Activated T-helper 1 cell treated with anti-CD3 and anti-CD28 coated beads, Interleukin-12 subunit alpha, Interleukin-12 subunit beta, Interleukin-2, Interleukin-4 antibody, amounts not matched to agents 30 ng/mL and 10 ng/mL and 1 ng/mL, durations not matched to agents 14 hours and 24 hours and 36 hours (primary cell): ENCODE measurements at regions of chr3 and their contacts with region 1.

Region 1: DNA sequence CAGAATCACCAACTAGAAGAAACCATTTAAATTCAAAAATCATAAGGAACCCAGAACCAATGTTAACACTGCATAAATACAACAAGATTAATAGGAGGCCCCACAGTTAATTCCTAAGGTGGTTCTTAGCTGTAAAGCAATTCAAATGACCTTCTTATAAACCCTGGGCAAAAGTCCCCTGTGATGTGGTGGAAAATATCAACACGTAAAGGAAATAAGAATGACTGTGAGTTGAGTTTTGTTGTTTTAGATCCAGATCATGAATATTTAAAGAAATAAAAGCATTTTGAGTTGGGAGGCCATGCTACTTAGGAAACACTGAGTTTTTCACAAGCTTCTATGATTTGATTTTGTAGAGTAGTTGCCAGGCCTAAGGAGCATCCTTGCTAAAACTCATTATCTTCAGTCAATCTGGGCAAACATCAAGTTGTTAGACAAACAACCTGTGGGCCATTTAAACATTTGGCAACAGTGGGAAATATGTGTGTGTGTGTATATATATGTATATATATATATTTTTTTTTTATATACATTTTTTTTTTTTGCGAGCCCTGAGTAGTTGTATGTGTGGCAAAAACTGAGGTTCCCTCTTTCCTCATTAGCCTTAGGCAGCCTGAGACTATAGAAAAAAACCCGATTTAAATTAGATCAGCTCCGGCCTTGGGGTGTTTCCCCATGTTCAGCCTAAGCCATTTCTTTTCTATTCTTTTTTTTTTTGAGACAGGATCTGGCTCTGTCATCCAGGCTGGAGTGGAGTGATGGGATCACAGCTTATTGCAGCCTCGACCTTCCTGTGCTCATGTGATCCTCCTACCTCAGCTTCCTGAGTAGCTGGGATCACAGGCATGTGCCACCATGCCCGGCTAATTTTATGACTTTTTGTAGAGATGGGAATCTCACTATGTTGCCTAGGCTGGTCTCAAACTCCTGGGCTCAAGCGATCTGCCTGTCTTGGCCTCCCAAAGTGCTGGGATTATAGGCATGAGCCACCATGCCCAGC is 8.0 kb upstream of the PXK start:
- DNase-seq: peak; percentile 6
- H3K4me3 Mint-ChIP-seq: peak overlapping the region; percentile 6
- H3K27ac Mint-ChIP-seq: peak overlapping the region; percentile 86
- H3K4me1 Mint-ChIP-seq: peaks cover 31% of the 10 kb centered on the region
- H3K27me3 Mint-ChIP-seq: no peaks in the 10 kb centered on the region

Region 2: DNA sequence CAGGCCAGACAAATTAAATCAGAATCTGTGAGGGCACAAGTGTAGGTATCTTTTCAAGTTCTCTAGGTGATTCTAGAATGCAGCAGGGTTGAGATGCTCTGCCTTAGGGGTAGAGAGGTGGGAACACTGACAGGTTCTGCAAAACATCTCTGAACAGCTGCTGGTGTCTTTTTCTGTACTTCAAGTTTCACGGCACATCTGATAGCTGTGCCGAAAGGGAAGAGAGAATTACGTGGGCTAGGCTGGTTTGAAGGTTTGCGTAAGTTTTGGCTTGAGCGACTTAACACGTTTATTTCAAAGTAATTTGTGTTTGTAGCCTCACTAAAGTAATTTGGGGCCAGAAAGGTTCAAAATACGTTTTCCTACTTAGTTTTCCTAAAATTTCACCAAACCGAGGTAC is 30.5 kb after region 1 on chr3:
- intact Hi-C with region 1: loop called (anchors 1 kb)
- DNase-seq: no peak
- H3K4me3 Mint-ChIP-seq: no peak overlapping the region
- H3K27ac Mint-ChIP-seq: peak overlapping the region; percentile 96
- H3K4me1 Mint-ChIP-seq: peaks cover 75% of the 10 kb centered on the region
- H3K27me3 Mint-ChIP-seq: no peaks in the 10 kb centered on the region

Region 3: DNA sequence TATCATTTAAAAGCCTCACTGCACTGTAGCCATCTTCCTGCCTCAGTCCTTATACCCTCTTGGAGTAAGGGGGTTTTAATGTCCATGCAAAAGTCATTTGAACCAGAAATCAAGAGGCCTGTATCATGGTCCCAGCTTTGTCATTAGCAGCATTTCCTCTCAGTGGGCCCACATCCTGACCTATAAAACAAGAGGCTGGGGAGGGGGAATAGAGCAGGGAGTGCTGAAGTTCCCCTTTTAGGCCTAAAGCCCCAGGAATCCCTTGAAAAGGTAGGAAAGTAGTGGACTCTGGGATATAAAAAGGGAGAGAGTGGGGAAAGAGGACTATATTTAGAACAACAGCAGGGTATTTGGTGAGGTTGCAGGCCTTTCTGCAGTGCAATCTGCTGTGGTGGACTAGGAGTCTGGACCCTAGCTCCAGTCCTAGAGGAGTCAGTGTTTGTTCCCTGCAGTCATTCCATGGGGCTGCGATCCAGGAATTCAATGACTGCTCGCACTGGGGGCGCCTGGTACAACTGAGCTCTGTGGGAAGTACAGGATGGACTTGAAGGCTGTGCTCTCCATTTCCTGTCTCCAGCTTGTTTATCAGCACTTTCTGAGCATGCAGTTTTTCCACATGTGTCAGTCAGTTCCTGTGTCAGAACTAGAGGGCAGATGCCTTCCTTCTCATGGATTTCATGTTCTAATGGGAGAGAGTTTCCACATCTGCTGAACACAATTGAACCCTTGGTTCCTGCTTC is 62.1 kb after region 1 on chr3:
- intact Hi-C with region 1: loop called (anchors 2 kb)
- DNase-seq: no peak
- H3K4me3 Mint-ChIP-seq: peak overlapping the region; percentile 19
- H3K27ac Mint-ChIP-seq: peak overlapping the region; percentile 81
- H3K4me1 Mint-ChIP-seq: peaks cover 40% of the 10 kb centered on the region
- H3K27me3 Mint-ChIP-seq: no peaks in the 10 kb centered on the region

Region 4: GRCh38 chr3:58471025-58471887 is 146.6 kb after region 1 on chr3:
- intact Hi-C with region 1: loop called (anchors 1 kb)
- DNase-seq: peak; percentile 73
- H3K4me3 Mint-ChIP-seq: peak overlapping the region; percentile 37
- H3K27ac Mint-ChIP-seq: peak overlapping the region; percentile 68
- H3K4me1 Mint-ChIP-seq: peaks cover 59% of the 10 kb centered on the region
- H3K27me3 Mint-ChIP-seq: peaks cover 8% of the 10 kb centered on the region

Region 5: DNA sequence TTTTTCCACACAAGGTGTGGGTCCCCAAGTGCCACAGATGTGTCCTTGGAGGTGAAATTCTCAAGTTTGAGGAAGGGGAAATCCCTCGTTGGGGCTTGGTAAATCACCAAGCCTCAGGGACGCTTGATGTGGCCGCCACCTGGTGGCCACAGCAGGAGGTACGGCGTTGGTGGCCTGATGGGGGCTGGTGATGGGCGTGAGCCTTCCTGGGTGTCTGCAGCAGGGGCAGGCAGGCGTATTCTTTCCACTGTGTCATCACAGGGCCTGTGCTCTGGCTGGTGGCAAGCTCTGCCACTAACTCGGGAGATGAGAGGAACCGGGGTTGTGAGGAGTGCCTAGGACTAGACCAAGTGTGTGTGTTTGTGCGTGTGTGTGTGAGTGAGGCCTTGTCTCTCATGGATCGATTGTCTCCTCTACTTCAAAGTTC is 208.1 kb after region 1 on chr3:
- intact Hi-C with region 1: loop called (anchors 1 kb)
- DNase-seq: peak; percentile 75
- H3K4me3 Mint-ChIP-seq: no peak overlapping the region
- H3K27ac Mint-ChIP-seq: peak overlapping the region; percentile 8
- H3K4me1 Mint-ChIP-seq: peaks cover 13% of the 10 kb centered on the region
- H3K27me3 Mint-ChIP-seq: peaks cover 15% of the 10 kb centered on the region

Region 6: DNA sequence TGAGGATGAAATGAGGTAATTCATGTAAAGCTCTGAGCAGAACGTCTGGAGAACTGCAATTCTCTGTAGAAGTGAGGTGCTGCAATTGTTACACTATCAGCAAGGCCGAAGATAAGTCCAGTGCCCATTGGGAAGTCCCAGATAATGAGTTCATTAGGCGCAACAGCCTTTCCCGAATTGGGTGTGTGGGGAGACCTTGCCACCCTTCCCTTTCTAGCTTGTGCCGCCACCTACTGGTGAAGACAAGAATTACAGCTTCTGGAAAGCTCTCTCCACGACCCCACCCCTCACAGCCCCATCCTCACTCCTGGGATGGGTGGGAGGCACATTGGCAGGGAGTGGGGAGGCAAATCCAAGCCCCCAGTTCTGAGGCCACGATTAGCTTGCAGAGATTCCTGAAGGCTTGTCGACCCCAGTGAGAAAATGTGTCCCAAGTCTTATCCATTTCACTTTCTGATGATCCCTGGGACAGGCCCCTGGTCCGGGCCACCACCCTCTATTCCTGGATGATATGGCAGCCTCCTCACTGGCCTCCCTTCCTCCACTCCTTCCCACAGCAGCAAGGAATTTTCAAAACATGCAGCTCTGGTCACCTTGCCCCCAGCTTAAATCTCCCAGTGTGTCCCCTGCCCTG is 305.5 kb after region 1 on chr3:
- intact Hi-C with region 1: loop called (anchors 5 kb)
- DNase-seq: peak; percentile 46
- H3K4me3 Mint-ChIP-seq: no peak overlapping the region
- H3K27ac Mint-ChIP-seq: no peak overlapping the region
- H3K4me1 Mint-ChIP-seq: no peaks in the 10 kb centered on the region
- H3K27me3 Mint-ChIP-seq: no peaks in the 10 kb centered on the region